WTC11 (cell line): ENCODE measurements at regions of chr6 and their contacts with region 1.

Region 1: GRCh38 chr6:131694831-131695426 is 6.3 kb downstream of the OR2A4 start:
- DNase-seq: peak; percentile 68
- ATAC-seq: peak; percentile 99
- H3K4me3 Mint-ChIP-seq: no peak overlapping the region
- H3K27ac Mint-ChIP-seq: no peak overlapping the region
- H3K4me1 Mint-ChIP-seq: peaks cover 9% of the 10 kb centered on the region
- H3K27me3 Mint-ChIP-seq: peaks cover 20% of the 10 kb centered on the region
- CTCF ChIP-seq: peak; percentile 62

Region 2: DNA sequence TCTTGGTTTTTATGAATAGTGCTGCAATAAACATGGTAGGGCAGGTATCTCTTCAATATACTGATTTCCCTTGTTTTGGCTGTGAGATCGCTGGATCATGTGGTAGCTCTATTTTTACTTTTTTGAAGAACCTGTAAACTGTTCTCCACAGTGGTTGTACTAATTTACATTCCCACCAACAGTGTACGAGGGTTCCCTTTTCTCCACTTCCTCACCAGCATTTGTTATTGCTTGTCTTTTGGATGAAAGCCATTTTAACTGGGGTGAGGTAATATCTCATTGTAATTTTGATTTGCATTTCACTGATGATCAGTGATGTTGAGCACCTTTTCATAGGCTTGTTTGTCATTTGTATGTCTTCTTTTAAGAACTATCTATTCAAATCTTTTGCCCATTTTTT is 129.9 kb before region 1 on chr6:
- CTCF ChIA-PET with region 1: no interaction called
- POLR2A ChIA-PET with region 1: no interaction called
- DNase-seq: no peak
- ATAC-seq: no peak
- H3K4me3 Mint-ChIP-seq: no peak overlapping the region
- H3K27ac Mint-ChIP-seq: no peak overlapping the region
- H3K4me1 Mint-ChIP-seq: no peaks in the 10 kb centered on the region
- H3K27me3 Mint-ChIP-seq: peaks cover 2% of the 10 kb centered on the region; the same call in 1 of the 2 replicates
- CTCF ChIP-seq: no peak

Region 3: DNA sequence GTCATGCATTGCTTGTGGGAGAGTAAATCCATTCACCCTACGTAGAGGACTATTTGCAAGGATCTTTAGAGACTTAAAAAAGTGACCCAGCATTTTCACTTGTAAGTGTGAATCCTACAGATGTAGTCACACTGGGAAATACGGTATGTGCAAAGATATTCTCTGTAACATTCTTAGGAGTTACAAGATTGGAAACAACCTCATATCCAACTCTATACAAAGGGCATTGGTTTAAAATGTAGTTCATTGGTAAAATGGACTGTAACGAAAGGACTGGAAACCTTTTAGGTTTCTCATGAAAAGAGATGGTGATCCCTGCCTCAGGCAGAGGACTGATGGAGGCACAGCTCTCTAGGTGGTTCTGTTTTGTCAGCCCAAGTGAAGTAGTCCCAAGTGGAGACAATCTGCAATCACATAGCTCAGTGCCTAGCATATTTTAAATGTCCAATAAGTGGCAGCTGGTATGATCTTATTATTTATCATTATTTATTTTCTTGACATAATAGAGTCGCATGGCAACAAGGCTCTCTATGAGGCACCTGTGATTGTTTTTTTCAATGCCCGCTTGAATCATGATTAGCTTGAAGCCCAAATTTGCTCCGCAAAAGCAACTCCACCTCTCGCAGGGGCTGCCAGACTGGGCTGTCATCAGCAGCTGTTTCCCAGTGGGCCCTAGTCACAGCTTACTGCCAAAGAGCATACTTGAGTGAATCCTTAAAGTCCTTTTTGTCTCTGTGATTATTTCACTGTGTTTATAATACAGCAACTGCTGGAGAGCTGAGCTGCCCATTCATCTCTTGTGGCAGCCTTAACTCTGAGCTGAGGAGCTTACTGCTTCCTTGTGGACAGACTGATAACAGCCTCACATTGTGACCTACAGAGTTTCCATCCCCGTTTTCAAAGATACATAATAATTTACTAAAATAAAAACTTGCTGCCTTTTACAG is 93.1 kb after region 1 on chr6:
- CTCF ChIA-PET with region 1: interaction called, 22 read pairs
- POLR2A ChIA-PET with region 1: no interaction called
- DNase-seq: no peak
- ATAC-seq: peak; percentile 71
- H3K4me3 Mint-ChIP-seq: no peak overlapping the region
- H3K27ac Mint-ChIP-seq: no peak overlapping the region
- H3K4me1 Mint-ChIP-seq: peaks cover 10% of the 10 kb centered on the region
- H3K27me3 Mint-ChIP-seq: peaks cover 11% of the 10 kb centered on the region
- CTCF ChIP-seq: no peak

Region 4: DNA sequence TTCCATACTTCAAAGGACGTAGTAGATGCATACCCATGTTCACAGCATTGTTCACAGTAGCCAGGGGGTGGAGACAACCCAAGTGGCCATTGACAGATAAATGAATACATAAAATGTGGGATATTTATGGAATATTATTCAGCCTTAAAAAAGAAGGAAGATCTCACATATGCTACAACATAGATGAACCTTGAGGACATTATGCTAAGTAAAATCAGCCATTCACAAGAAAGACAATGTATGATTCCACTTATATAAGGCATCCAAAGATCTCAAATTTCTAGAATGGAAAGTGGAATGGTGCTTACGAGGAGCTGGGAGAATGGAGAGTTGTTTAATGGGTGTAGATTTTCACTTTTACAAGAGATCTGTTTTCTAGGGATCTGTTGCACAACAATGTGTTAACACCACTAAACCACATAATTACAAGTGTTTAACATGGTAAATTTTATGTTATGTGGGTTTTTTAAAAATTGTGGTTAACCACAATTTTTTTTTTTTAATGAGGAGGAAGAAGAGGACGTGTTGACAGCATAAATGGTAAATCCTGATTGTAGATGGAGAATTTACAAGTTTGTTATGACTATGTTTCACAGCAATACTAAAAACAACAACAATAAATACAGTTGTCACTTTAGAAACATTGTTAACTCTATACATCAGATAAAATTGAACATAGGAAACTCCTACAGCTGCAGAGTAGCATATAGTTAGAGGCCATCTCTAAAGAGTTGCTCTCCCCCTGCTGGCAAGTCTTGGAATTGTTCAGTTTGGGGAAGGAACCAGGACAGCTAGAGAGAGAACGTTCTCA is 214.7 kb after region 1 on chr6:
- CTCF ChIA-PET with region 1: interaction called, 35 read pairs
- POLR2A ChIA-PET with region 1: no interaction called
- DNase-seq: peak; percentile 83
- ATAC-seq: peak; percentile 68
- H3K4me3 Mint-ChIP-seq: peak overlapping the region; percentile 57
- H3K27ac Mint-ChIP-seq: peak overlapping the region; percentile 83
- H3K4me1 Mint-ChIP-seq: peaks cover 80% of the 10 kb centered on the region
- H3K27me3 Mint-ChIP-seq: no peaks in the 10 kb centered on the region
- CTCF ChIP-seq: peak; percentile 80